Caco-2 (cell line): ENCODE measurements at regions of chr9 and their contacts with region 1.

Region 1: DNA sequence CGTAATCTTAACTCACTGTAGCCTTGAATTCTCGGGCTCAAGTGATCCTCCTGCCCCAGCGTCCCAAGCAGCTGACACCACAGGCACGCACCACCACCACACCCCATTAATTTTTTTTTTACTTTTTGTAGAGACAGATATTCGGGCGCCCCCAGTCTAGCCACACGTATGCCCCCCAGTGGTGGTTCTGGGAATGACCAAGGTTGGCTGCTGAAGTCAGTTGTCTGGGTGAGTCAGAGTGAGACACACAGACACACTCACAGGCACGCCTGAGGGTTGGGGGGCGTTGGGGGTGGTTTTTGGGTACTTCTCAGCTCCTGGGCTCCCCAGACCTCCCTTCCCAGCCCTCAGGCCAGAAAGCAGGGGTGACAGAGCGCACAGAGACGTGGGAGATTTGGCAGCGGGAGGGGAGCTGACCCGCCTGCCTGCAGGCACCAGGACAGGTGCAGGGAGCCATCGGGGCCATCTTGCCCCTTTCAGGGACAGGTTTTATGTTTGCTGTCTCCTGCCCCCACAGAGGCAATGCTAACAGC is 4.2 kb upstream of the ENTPD8 start:
- DNase-seq: peak; percentile 83 to 88
- H3K4me3 ChIP-seq: no peak overlapping the region
- H3K4me3 Mint-ChIP-seq: peak overlapping the region; percentile 54
- H3K27ac Mint-ChIP-seq: peak overlapping the region; percentile 19
- H3K4me1 ChIP-seq: peaks cover 13% of the 10 kb centered on the region
- H3K4me1 Mint-ChIP-seq: peaks cover 14% of the 10 kb centered on the region
- H3K27me3 ChIP-seq: no peaks in the 10 kb centered on the region
- H3K27me3 Mint-ChIP-seq: no peaks in the 10 kb centered on the region
- CTCF ChIP-seq: peak; percentile 85 to 91

Region 2: GRCh38 chr9:137070201-137070905 is 375.0 kb before region 1 on chr9 and contains the start of gene SAPCD2:
- CTCF ChIA-PET with region 1: interaction called, 12 read pairs
- POLR2A ChIA-PET with region 1: no interaction called
- intact Hi-C with region 1: no loop called
- DNase-seq: peak; percentile 95
- H3K4me3 ChIP-seq: peak within 1 kb of the TSS; percentile 80
- H3K4me3 Mint-ChIP-seq: peak within 1 kb of the TSS; percentile 68
- H3K27ac Mint-ChIP-seq: peak within 1 kb of the TSS; percentile 85
- H3K4me1 ChIP-seq: peaks cover 33% of the 10 kb centered on the region
- H3K4me1 Mint-ChIP-seq: peaks cover 18% of the 10 kb centered on the region
- H3K27me3 ChIP-seq: no peaks in the 10 kb centered on the region
- H3K27me3 Mint-ChIP-seq: no peaks in the 10 kb centered on the region
- CTCF ChIP-seq: no peak
- total RNA-seq, gene SAPCD2: 53.3 and 57.5 TPM in 2 replicates

Region 3: GRCh38 chr9:137302176-137302994 is 143.0 kb before region 1 on chr9 and contains the start of gene NRARP:
- CTCF ChIA-PET with region 1: interaction called, 14 read pairs
- POLR2A ChIA-PET with region 1: interaction called, 19 read pairs
- intact Hi-C with region 1: no loop called
- DNase-seq: peak; percentile 92 to 96
- H3K4me3 ChIP-seq: peak within 1 kb of the TSS; percentile 99
- H3K4me3 Mint-ChIP-seq: peak within 1 kb of the TSS; percentile 90
- H3K27ac Mint-ChIP-seq: peak within 1 kb of the TSS; percentile 84
- H3K4me1 ChIP-seq: peaks cover 16% of the 10 kb centered on the region
- H3K4me1 Mint-ChIP-seq: no peaks in the 10 kb centered on the region
- H3K27me3 ChIP-seq: no peaks in the 10 kb centered on the region
- H3K27me3 Mint-ChIP-seq: no peaks in the 10 kb centered on the region
- CTCF ChIP-seq: peak; percentile 71 to 77
- total RNA-seq, gene NRARP: 22.1 and 24.7 TPM in 2 replicates

Region 4: DNA sequence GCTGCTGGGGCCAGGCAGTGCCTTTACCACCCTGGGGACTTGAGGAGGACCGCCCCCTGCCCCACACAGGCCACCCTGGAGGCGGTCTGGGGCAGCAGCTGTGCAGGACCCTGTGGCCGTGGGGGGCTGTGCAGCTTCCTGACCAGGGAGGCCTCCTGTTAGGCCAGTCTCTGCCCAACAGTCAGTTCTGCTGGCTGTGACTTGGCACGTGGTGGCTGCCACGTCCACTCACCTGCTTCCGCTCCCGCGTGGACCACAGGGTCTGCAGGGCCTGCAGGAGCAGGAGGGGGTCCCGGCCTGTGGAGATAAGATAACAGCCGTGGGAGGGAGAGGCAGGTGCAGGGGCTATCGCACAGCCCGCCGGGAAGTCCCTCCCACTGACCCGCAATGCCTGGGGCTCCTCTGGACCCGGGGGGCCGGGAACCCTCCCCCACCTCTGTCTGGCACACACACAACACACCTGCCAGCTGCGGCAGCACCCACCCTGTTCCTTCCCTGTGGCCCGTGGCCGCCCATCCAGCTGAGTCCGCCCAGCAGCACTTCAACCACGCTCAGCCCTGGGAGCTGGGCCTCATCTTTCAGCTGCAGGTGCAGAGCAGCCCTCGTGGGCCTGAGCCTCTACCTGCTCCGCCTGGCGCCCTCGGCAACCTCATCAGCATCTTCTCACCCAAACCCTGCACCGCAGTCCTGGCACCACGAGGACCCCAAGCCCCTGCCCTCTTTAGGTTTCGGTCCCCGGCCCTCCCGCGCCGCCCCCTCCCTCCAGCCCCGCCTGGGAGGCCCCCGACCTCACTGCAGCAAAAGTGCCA is 62.1 kb before region 1 on chr9:
- CTCF ChIA-PET with region 1: no interaction called
- POLR2A ChIA-PET with region 1: no interaction called
- intact Hi-C with region 1: no loop called
- DNase-seq: peak in 1 of 2 experiments; percentile 26
- H3K4me3 ChIP-seq: no peak overlapping the region
- H3K4me3 Mint-ChIP-seq: no peak overlapping the region
- H3K27ac Mint-ChIP-seq: no peak overlapping the region
- H3K4me1 ChIP-seq: no peaks in the 10 kb centered on the region
- H3K4me1 Mint-ChIP-seq: no peaks in the 10 kb centered on the region
- H3K27me3 ChIP-seq: no peaks in the 10 kb centered on the region
- H3K27me3 Mint-ChIP-seq: no peaks in the 10 kb centered on the region
- CTCF ChIP-seq: no peak

Region 5: DNA sequence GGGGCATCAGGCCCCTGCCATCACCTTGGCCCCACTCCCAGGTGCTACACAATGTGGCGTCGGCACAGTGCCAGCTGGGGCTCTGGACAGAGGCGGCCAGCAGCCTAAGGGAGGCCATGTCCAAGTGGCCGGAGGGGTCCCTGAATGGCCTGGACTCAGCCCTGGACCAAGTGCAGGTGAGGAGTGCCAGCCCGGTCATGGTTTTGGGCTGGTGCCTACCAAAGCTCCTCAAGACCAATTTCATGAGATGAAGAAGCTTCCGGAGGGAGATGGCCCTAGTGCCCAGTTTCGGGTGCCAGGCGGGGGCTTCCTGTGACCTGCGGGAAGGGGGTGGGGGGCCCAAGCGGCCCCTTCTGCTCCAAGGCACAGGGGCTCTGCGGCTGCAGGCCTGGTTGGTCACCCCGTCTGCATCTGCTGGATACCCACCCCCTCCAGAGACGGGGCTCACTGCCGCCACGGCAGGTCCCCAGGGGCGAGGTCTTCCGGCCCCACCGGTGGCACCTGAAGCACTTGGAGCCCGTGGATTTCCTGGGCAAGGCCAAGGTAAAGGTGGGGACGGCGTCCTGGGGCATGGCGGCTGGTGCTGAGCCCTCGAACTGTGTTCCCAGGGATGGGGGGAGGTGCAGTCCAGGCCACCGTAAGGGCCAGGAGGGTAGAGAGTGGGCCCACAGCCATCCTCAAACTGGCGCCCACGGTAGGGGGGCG is 16.3 kb before region 1 on chr9:
- CTCF ChIA-PET with region 1: interaction called, 40 read pairs
- POLR2A ChIA-PET with region 1: interaction called, 3 read pairs
- intact Hi-C with region 1: loop called (anchors 1 kb)
- DNase-seq: no peak
- H3K4me3 ChIP-seq: no peak overlapping the region
- H3K4me3 Mint-ChIP-seq: no peak overlapping the region
- H3K27ac Mint-ChIP-seq: no peak overlapping the region
- H3K4me1 ChIP-seq: peaks cover 15% of the 10 kb centered on the region
- H3K4me1 Mint-ChIP-seq: peaks cover 6% of the 10 kb centered on the region
- H3K27me3 ChIP-seq: no peaks in the 10 kb centered on the region
- H3K27me3 Mint-ChIP-seq: no peaks in the 10 kb centered on the region
- CTCF ChIP-seq: no peak

Region 6: GRCh38 chr9:137590462-137591383 is 145.4 kb after region 1 on chr9 and contains the start of gene ZMYND19:
- CTCF ChIA-PET with region 1: no interaction called
- POLR2A ChIA-PET with region 1: no interaction called
- intact Hi-C with region 1: loop called (anchors 10 kb)
- DNase-seq: peak; percentile 85 to 94
- H3K4me3 ChIP-seq: peak within 1 kb of the TSS; percentile 92
- H3K4me3 Mint-ChIP-seq: peak within 1 kb of the TSS; percentile 77
- H3K27ac Mint-ChIP-seq: peak within 1 kb of the TSS; percentile 78
- H3K4me1 ChIP-seq: peaks cover 8% of the 10 kb centered on the region
- H3K4me1 Mint-ChIP-seq: no peaks in the 10 kb centered on the region
- H3K27me3 ChIP-seq: no peaks in the 10 kb centered on the region
- H3K27me3 Mint-ChIP-seq: no peaks in the 10 kb centered on the region
- CTCF ChIP-seq: peak in 1 of 2 experiments; percentile 15
- total RNA-seq, gene ZMYND19: 66.3 and 66.9 TPM in 2 replicates